GM10248 (cell line): ENCODE measurements at regions of chr6 and their contacts with region 1.

Region 1: DNA sequence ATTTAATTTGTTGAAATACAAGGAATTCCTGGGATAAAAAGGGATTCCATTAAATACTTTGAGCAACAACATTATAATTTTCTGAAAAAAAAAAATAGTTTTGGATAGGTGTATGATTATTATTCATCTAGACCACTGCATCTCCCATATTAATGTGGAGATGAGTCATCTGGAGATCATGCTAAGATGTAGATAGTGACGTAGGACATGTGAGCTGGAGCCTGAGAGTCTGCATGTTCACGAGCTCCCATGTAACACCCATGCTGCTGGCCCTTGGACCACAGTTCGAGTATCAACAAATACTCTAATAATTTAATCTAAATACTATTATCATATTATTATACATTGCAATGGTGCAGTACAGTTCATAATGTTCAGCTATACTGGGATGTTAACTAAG is 91.6 kb downstream of the EPM2A start:
- DNase-seq: no peak
- CTCF ChIP-seq: no peak

Region 2: DNA sequence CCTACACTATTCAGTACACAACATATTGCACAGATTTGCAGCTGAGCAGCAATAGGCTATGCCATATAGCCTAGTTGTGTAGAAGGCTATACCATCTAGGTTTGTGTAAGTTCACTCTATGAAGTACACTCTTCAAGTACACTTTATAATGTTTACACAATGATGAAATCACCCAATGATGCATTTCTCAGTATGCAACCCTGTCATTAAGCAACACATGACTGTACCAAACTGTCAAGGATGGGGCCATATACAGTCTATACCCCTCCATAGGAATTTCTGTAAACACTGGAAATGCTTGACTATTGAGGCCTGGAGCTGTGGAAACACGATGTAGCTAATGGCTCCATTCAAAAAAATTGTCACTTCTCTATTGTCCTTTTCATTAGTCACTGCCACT is 443.8 kb before region 1 on chr6:
- CTCF ChIA-PET with region 1: no interaction called
- POLR2A ChIA-PET with region 1: no interaction called
- DNase-seq: no peak
- CTCF ChIP-seq: no peak

Region 3: DNA sequence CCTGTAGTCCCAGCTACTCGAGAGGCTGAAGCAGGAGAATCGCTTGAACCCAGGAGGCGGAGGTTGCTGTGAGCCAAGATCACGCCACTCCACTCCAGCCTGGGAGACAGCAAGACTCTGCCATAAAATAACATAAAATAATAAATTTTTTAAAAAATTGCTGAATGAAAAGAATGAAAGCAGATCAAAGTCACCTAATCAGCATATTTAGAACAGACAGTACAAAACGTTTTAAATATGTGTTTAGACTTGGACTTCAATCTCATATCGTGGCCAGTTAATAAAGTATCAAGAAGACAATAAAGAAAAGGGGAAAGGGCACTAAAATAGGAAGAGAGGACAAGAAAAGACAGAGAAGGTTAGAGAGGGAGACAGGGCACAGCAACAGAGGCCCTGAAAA is 16.9 kb after region 1 on chr6:
- CTCF ChIA-PET with region 1: interaction called, 11 read pairs
- POLR2A ChIA-PET with region 1: no interaction called
- DNase-seq: no peak
- CTCF ChIP-seq: no peak